ENCODE measurements at regions of chr1 and their contacts with region 1.

Region 1: GRCh38 chr1:240455228-240455821 is 156.6 kb downstream of the GREM2 start:
- ATAC-seq: peak in 2 of 8 experiments; percentile 16 to 53
- H3K4me3 ChIP-seq: no peak overlapping the region
- H3K27ac ChIP-seq: no peak overlapping the region
- H3K4me1 ChIP-seq: no peaks in the 10 kb centered on the region

Region 2: DNA sequence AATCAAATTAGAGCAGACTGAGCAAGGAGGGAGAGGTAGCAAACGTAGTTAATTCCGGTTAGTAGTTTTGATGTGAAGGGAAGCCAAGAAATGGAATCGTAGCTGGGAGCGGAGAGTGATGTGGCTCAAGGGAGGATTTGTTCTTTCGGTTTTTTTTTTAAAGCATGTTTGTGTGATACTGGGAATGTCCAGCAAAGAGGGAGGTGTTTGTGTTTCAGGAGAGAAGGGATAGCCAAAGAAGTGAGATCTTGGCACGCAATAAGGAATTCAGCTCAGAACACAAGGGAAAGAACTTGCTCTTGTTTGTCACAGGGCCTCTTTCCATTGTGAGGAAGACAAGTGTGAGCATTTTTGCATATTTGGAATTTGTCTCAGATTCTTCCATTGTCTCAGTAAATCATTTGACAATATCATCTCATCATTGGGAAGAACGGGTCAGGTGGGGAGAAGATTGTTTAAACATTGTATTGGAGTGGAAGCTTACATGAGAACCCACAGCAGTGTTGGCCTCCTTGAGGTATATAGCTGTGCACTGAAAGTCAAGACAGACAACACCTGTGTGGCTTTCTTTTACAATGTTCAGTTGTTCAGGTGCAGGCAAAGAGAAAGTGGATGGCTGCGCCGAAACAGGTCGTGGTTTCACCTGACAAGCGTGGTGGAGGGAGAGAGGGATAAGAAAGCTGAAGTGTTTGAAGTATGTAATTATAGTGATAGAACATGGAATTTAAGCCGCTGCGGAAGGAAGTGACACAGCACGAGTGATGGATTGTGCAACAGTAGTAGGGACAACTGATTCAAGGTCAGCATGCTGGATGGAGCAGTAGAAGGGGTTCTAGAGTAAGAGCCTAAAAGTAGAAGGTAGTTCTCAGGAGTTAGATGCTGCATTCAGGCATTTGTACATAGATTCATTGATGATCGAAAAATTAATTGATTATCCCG is 338.2 kb before region 1 on chr1:
- in situ Hi-C with region 1: no loop called
- ATAC-seq: peak in 1 of 8 experiments; percentile 36
- H3K4me3 ChIP-seq: no peak overlapping the region
- H3K27ac ChIP-seq: no peak overlapping the region
- H3K4me1 ChIP-seq: peaks cover 0 to 4% of the 10 kb centered on the region in 2 donors

Region 3: DNA sequence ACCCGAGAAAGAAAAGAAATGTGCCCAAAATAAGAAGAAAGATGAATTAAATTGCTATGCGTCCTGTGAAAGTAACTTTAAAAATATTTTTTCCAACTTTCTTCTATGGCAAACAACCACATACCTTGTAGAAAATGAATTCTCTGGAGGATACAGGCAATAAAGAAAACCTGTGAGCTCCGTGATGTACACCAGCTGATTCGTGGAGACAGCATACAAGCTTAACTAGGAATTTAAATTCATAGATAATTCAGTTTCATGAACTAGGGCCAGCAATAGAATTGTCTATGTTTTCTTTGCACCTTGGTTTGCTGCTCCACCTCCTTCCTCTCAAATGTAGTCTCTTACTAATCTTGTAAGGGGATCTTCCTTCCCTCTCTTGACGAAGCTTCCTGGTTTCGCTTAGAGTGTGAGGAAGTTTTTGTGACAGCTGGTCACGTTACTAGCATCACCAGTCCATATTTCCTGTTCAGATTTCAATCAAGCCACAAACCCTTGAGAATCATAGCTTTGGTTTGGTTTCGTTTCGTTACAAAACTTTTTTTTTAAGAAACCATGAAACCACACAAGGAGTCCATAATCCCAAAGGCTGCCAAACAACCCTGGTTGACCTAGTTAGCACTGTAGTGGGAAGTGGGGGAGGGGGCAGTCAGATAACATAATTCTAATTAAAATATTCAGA is 120.8 kb after region 1 on chr1:
- in situ Hi-C with region 1: loop called in 1 of 9 experiments (anchors 25 kb)
- ATAC-seq: peak in 2 of 8 experiments; percentile 71 to 98
- H3K4me3 ChIP-seq: no peak overlapping the region
- H3K27ac ChIP-seq: no peak overlapping the region
- H3K4me1 ChIP-seq: no peaks in the 10 kb centered on the region

Region 4: GRCh38 chr1:240936911-240937668 is 481.8 kb after region 1 on chr1:
- in situ Hi-C with region 1: no loop called
- ATAC-seq: no peak
- H3K4me3 ChIP-seq: no peak overlapping the region
- H3K27ac ChIP-seq: no peak overlapping the region
- H3K4me1 ChIP-seq: peaks cover 2 to 5% of the 10 kb centered on the region in 2 donors